Common myeloid progenitor, CD34-positive (primary cell): ENCODE measurements at regions of chr3 and their contacts with region 1.

Region 1: GRCh38 chr3:124688581-124689454 is 41.4 kb upstream of the UMPS start:
- DNase-seq: peak; percentile 77 to 87 (median 83)
- H3K4me3 ChIP-seq: no peak overlapping the region
- H3K27ac ChIP-seq: no peak overlapping the region
- H3K4me1 ChIP-seq: peaks cover 0 to 3% (median 2%) of the 10 kb centered on the region in 4 experiments
- H3K27me3 ChIP-seq: peaks cover 0 to 2% (median 0%) of the 10 kb centered on the region in 5 experiments

Region 2: DNA sequence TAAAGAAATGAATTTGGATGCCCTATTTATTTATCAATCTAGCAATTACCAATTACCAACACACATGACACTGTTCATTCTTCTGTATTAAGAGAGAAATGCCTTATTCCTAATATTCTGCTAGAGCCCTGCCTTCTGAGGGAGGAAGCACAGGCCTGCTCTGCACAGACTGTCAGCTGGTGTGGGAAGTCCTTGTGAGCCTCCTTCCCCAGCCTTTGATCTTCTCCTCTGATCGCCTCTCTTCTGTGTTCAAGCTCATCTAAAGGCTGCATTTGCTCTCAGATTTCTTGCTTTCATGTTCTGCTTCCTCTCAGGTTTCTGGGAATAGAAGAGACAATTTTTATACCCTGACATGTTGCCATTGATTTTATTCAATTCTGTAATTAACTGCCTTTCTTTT is 249.2 kb before region 1 on chr3:
- CTCF ChIA-PET with region 1: no interaction called
- POLR2A ChIA-PET with region 1: no interaction called
- DNase-seq: no peak
- H3K4me3 ChIP-seq: no peak overlapping the region
- H3K27ac ChIP-seq: no peak overlapping the region
- H3K4me1 ChIP-seq: peaks cover 0 to 11% (median 1%) of the 10 kb centered on the region in 4 experiments
- H3K27me3 ChIP-seq: no peaks in the 10 kb centered on the region

Region 3: GRCh38 chr3:124569761-124570160 is 119.1 kb before region 1 on chr3:
- CTCF ChIA-PET with region 1: interaction called, 194 read pairs
- POLR2A ChIA-PET with region 1: no interaction called
- DNase-seq: no peak
- H3K4me3 ChIP-seq: no peak overlapping the region
- H3K27ac ChIP-seq: no peak overlapping the region
- H3K4me1 ChIP-seq: peaks cover 0 to 9% (median 5%) of the 10 kb centered on the region in 4 experiments
- H3K27me3 ChIP-seq: no peaks in the 10 kb centered on the region

Region 4: GRCh38 chr3:124650798-124651197 is 38.0 kb before region 1 on chr3:
- CTCF ChIA-PET with region 1: interaction called, 30 read pairs
- POLR2A ChIA-PET with region 1: no interaction called
- DNase-seq: peak; percentile 30 to 69 (median 56)
- H3K4me3 ChIP-seq: peak overlapping the region in 2 of 7 experiments; percentile 0 to 6
- H3K27ac ChIP-seq: no peak overlapping the region
- H3K4me1 ChIP-seq: peaks cover 24 to 65% (median 50%) of the 10 kb centered on the region in 4 experiments
- H3K27me3 ChIP-seq: no peaks in the 10 kb centered on the region